ENCODE measurements at regions of chr10 and their contacts with region 1.

Region 1: GRCh38 chr10:73246783-73247508 is at the start of gene DNAJC9:
- DNase-seq: peak; percentile 90 to 99
- H3K4me3 ChIP-seq: peak within 1 kb of the TSS; percentile 92 to 93
- H3K27ac ChIP-seq: peak within 1 kb of the TSS; percentile 71 to 83
- H3K4me1 ChIP-seq: peaks cover 6 to 27% of the 10 kb centered on the region in 2 donors
- H3K27me3 ChIP-seq: no peaks in the 10 kb centered on the region
- CTCF ChIP-seq: no peak
- total RNA-seq, gene DNAJC9: 5.3 TPM

Region 2: DNA sequence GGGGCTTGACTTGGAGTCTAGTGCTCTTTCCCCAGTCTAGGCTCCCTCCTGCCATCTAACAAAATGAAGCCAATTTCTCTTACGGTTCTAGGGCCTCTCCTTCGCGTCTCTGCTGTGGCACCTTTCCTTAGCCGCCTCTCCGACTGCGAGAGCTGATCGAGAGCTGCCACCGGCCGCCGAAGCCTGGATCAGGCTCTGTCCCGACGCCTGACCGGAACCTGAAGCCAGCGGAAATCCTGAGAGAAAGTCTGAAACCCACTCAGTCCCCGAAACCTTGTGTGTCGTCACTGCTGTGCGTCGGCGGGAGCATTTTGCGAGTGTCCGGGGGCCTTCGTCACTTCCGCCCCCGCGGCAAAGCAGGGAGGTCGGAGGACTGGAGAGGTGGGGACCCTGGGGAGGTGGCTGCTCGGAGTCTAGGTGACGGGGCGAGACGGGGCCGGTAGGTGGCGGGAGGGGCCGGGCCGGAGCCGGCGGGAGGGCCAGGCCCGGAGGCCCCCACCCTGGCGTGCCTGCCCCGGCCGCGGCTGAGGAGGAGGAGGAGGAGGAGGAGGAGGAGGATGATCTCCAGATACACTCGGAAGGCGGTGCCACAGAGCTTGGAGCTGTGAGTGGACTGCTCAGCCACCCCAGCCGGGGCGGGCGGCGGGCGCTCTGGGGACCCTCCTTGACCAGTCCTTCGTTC is 79.0 kb before region 1 on chr10 and contains the starts of genes ECD and FAM149B1:
- intact Hi-C with region 1: loop called (anchors 2 kb)
- DNase-seq: peak; percentile 84 to 97
- H3K4me3 ChIP-seq: peak within 1 kb of the TSS; percentile 82 to 88
- H3K27ac ChIP-seq: peak within 1 kb of the TSS; percentile 96 to 97
- H3K4me1 ChIP-seq: peaks cover 0 to 19% of the 10 kb centered on the region in 2 donors
- H3K27me3 ChIP-seq: no peaks in the 10 kb centered on the region
- CTCF ChIP-seq: peak in 2 of 3 experiments; percentile 30 to 49
- total RNA-seq, gene ECD: 6.2 TPM
- total RNA-seq, gene FAM149B1: 19.4 TPM

Region 3: GRCh38 chr10:73358331-73359279 is 111.7 kb after region 1 on chr10 and contains the start of gene CFAP70:
- intact Hi-C with region 1: loop called (anchors 2 kb)
- DNase-seq: peak; percentile 65 to 94
- H3K4me3 ChIP-seq: peak within 1 kb of the TSS; percentile 68 to 81
- H3K27ac ChIP-seq: no peak within 1 kb of the TSS
- H3K4me1 ChIP-seq: peaks cover 0 to 4% of the 10 kb centered on the region in 2 donors
- H3K27me3 ChIP-seq: no peaks in the 10 kb centered on the region
- CTCF ChIP-seq: no peak
- total RNA-seq, gene CFAP70: not detected

Region 4: GRCh38 chr10:73413528-73414229 is 166.7 kb after region 1 on chr10 and contains the start of gene ANXA7:
- intact Hi-C with region 1: loop called (anchors 2 kb)
- DNase-seq: peak; percentile 63 to 96
- H3K4me3 ChIP-seq: peak within 1 kb of the TSS; percentile 87 to 93
- H3K27ac ChIP-seq: peak within 1 kb of the TSS; percentile 96 to 98
- H3K4me1 ChIP-seq: peaks cover 3 to 10% of the 10 kb centered on the region in 2 donors
- H3K27me3 ChIP-seq: no peaks in the 10 kb centered on the region
- CTCF ChIP-seq: peak in 1 of 3 experiments; percentile 45
- total RNA-seq, gene ANXA7: 63.2 TPM